Heart right ventricle (tissue), 16 donors: ENCODE measurements at regions of chr2 and their contacts with region 1.

Region 1: DNA sequence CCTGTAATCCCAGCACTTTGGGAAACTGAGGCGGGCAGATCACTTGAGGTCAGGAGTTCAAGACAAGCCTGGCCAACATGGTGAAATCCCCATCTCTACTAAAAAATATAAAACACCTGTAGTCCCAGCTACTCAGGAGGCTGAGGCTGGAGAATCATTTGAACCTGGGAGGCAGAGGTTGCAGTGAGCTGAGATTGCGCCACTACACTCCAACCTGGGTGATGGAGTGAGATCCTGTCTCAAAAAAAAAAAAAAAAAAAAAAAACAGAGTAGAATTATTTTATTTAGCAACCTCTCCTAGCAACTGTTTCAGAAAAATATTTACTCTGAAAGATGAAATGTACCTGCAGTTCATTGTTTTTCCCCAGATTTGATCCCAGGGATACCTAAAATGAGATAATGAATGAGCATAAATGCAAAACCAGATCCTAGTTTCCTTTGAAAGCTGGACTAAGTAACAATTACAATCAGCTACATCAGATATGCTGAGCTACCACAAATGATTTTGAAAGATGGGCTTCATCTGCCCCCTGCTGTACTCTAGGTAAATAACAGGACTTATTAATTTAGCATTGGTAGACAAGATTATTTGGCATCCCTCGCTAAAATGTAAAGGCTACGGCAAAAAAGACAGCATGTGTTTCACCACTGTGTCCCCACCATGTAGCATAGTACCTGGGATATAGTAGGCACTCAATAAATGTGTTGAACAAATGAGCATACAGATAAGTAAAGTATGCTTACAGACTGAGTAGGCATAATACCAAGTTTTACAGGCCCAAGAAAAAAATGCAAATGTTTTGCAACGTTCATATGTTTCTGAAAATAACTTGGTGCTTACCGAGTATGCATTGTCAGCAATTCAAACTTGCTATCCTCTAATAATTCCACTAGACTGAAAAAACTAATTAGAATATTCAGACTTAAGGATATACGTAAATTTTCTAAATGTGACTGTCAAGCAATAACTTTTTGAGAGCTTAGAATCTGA is 102.5 kb downstream of the ATL2 start:
- DNase-seq: peak in 1 of 2 donors; percentile 43
- ATAC-seq: peak in 7 of 8 donors; percentile 58 to 85 (median 72)
- H3K4me3 ChIP-seq: no peak overlapping the region
- H3K27ac ChIP-seq: no peak overlapping the region
- H3K4me1 ChIP-seq: peaks cover 0 to 6% (median 0%) of the 10 kb centered on the region in 9 donors
- H3K27me3 ChIP-seq: no peaks in the 10 kb centered on the region
- CTCF ChIP-seq: peak; percentile 22 to 77 (median 67)

Region 2: DNA sequence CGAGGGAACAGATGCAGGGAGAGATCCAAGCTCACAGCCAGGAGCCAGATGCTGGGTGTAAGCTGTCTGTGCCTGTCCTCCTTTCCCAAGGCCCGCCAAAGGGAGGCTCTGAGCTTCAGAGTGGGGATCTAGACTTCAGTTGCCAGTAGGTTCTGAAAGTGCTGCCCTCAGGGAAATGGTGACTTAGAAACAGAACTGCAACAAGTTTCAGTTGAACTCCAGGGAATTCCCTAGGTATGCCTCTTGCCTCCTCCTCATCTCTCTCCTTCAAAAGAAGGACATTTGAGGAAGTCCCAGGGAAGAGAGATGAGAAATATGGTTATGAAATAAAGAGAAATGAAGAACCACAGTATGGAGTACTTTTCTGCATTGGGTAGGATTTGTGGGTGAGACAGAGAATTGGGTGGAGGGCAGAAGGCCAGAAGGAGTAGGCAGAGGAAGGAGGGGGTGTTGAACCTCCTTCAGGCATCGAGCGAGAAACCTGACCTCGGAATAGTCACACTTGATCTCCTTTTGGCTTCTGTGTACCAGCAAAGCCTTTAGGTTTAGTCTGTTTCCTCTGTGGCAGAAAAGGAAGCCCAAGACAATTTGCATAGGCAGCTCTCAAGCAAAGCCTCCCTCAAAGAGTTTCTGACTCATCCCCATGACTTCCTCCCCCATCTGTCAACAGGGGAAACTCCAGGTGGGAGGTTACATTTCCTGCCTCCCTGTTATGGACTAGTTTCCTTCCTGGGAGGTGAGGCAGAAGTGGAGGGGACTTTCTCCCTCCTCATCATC is 884.4 kb before region 1 on chr2:
- intact Hi-C with region 1: loop called in 6 of 10 experiments (anchors 5 to 10 kb)
- DNase-seq: peak in 1 of 2 donors; percentile 26
- ATAC-seq: peak in 6 of 8 donors; percentile 49 to 90 (median 77)
- H3K4me3 ChIP-seq: no peak overlapping the region
- H3K27ac ChIP-seq: peak overlapping the region in 7 of 10 donors; percentile 14 to 72 (median 48)
- H3K4me1 ChIP-seq: peaks cover 0 to 32% (median 16%) of the 10 kb centered on the region in 9 donors
- H3K27me3 ChIP-seq: no peaks in the 10 kb centered on the region
- CTCF ChIP-seq: no peak

Region 3: GRCh38 chr2:37890893-37891495 is 383.6 kb before region 1 on chr2:
- intact Hi-C with region 1: loop called in 3 of 10 experiments (anchors 10 kb)
- DNase-seq: peak; percentile 67
- ATAC-seq: peak; percentile 79 to 95 (median 90)
- H3K4me3 ChIP-seq: no peak overlapping the region
- H3K27ac ChIP-seq: no peak overlapping the region
- H3K4me1 ChIP-seq: peaks cover 0 to 45% (median 5%) of the 10 kb centered on the region in 9 donors
- H3K27me3 ChIP-seq: peaks cover 0 to 5% (median 0%) of the 10 kb centered on the region in 7 donors
- CTCF ChIP-seq: peak; percentile 66 to 89 (median 80)

Region 4: GRCh38 chr2:37916512-37917082 is 358.0 kb before region 1 on chr2:
- intact Hi-C with region 1: loop called in 1 of 10 experiments (anchors 10 kb)
- DNase-seq: peak in 1 of 2 donors; percentile 39
- ATAC-seq: peak; percentile 53 to 92 (median 87)
- H3K4me3 ChIP-seq: no peak overlapping the region
- H3K27ac ChIP-seq: peak overlapping the region in 6 of 10 donors; percentile 2 to 59 (median 17)
- H3K4me1 ChIP-seq: peaks cover 0 to 29% (median 19%) of the 10 kb centered on the region in 9 donors
- H3K27me3 ChIP-seq: no peaks in the 10 kb centered on the region
- CTCF ChIP-seq: no peak

Region 5: GRCh38 chr2:37982147-37982582 is 292.4 kb before region 1 on chr2:
- intact Hi-C with region 1: loop called (anchors 1 to 5 kb)
- DNase-seq: peak; percentile 51 to 80
- ATAC-seq: peak in 5 of 8 donors; percentile 23 to 62 (median 53)
- H3K4me3 ChIP-seq: peak overlapping the region in 8 of 10 donors; percentile 4 to 45 (median 34)
- H3K27ac ChIP-seq: no peak overlapping the region
- H3K4me1 ChIP-seq: peaks cover 0 to 14% (median 0%) of the 10 kb centered on the region in 9 donors
- H3K27me3 ChIP-seq: no peaks in the 10 kb centered on the region
- CTCF ChIP-seq: peak; percentile 82 to 94 (median 87)

Region 6: GRCh38 chr2:38076606-38077430 is 197.8 kb before region 1 on chr2:
- intact Hi-C with region 1: loop called in 4 of 10 experiments (anchors 2 to 10 kb)
- DNase-seq: peak; percentile 79
- ATAC-seq: peak; percentile 63 to 87 (median 75)
- H3K4me3 ChIP-seq: peak overlapping the region; percentile 33 to 67 (median 62)
- H3K27ac ChIP-seq: peak overlapping the region; percentile 84 to 96 (median 92)
- H3K4me1 ChIP-seq: peaks cover 3 to 63% (median 39%) of the 10 kb centered on the region in 9 donors
- H3K27me3 ChIP-seq: peaks cover 0 to 69% (median 43%) of the 10 kb centered on the region in 7 donors
- CTCF ChIP-seq: peak in 8 of 9 donors; percentile 5 to 60 (median 38)

Region 7: GRCh38 chr2:38115216-38116032 is 159.2 kb before region 1 on chr2:
- intact Hi-C with region 1: loop called in 3 of 10 experiments (anchors 5 to 10 kb)
- DNase-seq: peak; percentile 73 to 89
- ATAC-seq: peak in 7 of 8 donors; percentile 57 to 85 (median 76)
- H3K4me3 ChIP-seq: no peak overlapping the region
- H3K27ac ChIP-seq: peak overlapping the region in 8 of 10 donors; percentile 15 to 73 (median 63)
- H3K4me1 ChIP-seq: peaks cover 2 to 64% (median 37%) of the 10 kb centered on the region in 9 donors
- H3K27me3 ChIP-seq: no peaks in the 10 kb centered on the region
- CTCF ChIP-seq: peak; percentile 87 to 98 (median 94)

Region 8: DNA sequence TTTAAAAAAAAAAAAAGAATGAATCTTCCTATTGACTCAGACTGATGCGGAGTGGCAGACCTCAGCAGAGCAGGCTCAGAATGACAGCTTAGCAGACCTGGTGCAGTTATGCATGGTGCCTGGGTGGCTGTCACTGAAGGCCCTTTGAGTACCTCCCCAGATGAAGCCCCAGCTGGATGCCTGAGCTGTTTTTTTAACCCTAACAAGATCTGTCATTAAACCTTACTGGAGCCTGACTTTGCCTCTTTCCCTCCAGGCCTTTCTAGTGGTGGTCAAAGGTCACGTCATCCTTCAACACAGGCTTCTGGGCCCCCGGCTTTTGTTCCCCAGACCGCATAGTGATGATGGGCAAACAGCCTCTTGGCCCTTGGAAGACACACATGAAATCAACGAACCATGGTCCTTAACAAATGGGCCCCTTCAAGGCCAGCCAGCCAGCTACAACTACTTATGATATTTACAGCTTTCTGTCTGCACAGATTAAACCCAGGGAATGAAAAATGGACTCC is 60.3 kb before region 1 on chr2:
- intact Hi-C with region 1: no loop called
- DNase-seq: no peak
- ATAC-seq: no peak
- H3K4me3 ChIP-seq: no peak overlapping the region
- H3K27ac ChIP-seq: no peak overlapping the region
- H3K4me1 ChIP-seq: peaks cover 0 to 9% (median 0%) of the 10 kb centered on the region in 9 donors
- H3K27me3 ChIP-seq: peaks cover 0 to 15% (median 0%) of the 10 kb centered on the region in 7 donors
- CTCF ChIP-seq: no peak

Region 9: DNA sequence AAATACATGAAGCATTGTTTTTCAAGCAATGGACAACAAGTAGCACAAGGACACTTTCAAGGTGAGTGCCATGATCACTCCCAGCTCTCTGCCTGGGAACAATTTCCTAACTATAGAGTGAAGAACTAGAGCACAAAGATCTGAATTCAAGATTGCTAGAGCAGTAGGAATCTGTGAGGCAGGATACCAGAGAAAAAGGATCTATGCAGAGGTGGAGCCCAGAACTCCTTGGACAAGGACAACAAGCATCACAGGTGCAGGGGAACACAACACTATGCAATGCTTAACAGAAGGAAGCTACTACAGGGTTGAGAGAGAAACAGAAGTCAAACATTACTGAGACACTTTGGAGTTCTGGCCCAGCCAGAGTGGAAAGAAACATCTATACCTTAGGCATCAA is 77.8 kb after region 1 on chr2:
- intact Hi-C with region 1: no loop called
- DNase-seq: no peak
- ATAC-seq: peak in 1 of 8 donors; percentile 22
- H3K4me3 ChIP-seq: no peak overlapping the region
- H3K27ac ChIP-seq: no peak overlapping the region
- H3K4me1 ChIP-seq: peaks cover 0 to 20% (median 7%) of the 10 kb centered on the region in 9 donors
- H3K27me3 ChIP-seq: no peaks in the 10 kb centered on the region
- CTCF ChIP-seq: no peak